HEK293 (cell line): ENCODE measurements at regions of chr17 and their contacts with region 1.

Region 1: DNA sequence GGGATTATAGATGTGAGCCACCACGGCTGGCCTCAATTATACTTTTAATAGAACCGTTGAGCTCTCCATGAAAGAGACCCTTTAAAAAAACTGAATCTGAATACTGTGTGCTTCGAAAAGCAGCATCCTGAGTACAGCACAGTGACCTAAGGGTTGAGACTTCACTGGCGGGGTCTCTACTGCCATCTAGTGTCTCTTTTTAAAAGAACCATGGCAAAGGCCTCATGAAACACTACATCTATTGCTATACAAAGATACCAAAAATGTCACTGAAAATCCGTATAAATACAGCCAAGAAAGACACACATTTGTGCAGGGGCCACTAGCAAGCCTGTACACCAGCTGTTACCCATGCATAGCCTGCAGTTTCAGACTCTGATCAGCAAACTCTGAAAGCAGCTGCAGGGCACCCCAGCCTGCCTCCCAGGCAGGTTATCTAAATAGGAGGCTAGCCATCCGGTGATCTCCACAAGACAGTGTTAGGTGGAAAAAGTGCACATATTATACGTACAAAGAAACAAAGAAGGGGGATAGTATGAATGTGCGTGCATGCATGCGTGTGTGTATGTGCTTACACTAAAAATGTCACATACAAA is 35.3 kb downstream of the NPLOC4 start:
- H3K4me3 ChIP-seq: no peak overlapping the region
- H3K27ac ChIP-seq: no peak overlapping the region
- H3K4me1 ChIP-seq: no peaks in the 10 kb centered on the region
- CTCF ChIP-seq: peak; percentile 43; the same call in 1 of the 2 replicates

Region 2: GRCh38 chr17:81419328-81419885 is 182.2 kb before region 1 on chr17:
- CTCF ChIA-PET with region 1: no interaction called
- POLR2A ChIA-PET with region 1: no interaction called
- H3K4me3 ChIP-seq: peak overlapping the region; percentile 25
- H3K27ac ChIP-seq: peak overlapping the region; percentile 81
- H3K4me1 ChIP-seq: peaks cover 16% of the 10 kb centered on the region
- CTCF ChIP-seq: no peak

Region 3: DNA sequence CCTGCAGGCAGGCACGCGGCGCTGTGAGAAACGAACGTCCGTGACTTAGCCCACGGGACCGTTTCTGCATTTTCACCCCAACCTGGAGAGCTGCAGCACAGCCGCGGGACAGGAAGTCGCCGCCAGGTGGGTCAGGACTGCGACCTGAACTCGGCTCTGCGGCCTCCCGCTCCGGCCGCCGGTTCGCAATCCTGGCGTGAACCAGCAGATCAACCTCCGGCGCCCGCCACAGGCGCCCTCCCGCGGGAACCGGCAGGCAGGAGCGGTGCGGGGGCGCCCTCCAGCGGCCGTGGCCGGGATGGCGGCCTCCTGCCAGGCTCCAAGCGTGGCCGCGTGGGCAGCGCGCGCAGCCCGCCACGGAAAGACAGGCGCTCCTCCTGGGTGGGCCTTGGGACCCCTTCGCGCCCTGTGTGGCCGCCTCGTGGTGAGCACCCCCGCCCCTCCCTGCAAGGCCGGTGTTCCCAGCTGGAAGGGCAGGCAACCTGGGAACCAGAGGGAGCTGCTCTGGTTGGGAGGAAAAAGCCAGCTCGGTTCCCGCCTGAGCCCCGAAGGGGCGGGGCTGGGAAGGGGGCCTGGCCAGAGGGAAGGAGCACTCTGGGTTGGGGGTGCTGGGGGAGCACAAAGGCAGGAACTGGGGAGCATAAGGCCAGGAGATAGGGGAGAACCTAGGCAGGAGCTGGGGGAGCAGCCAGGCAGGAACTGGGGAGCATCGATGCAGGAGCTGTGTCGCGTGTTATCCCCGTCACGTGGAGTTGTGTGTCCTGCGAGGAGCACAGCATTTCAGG is 117.2 kb before region 1 on chr17:
- CTCF ChIA-PET with region 1: interaction called, 17 read pairs
- POLR2A ChIA-PET with region 1: no interaction called
- H3K4me3 ChIP-seq: peak overlapping the region; percentile 45
- H3K27ac ChIP-seq: peak overlapping the region; percentile 24; the same call in 1 of the 2 replicates
- H3K4me1 ChIP-seq: peaks cover 8% of the 10 kb centered on the region
- CTCF ChIP-seq: peak; percentile 93

Region 4: GRCh38 chr17:81543339-81543675 is 58.3 kb before region 1 on chr17:
- CTCF ChIA-PET with region 1: interaction called, 13 read pairs
- POLR2A ChIA-PET with region 1: no interaction called
- H3K4me3 ChIP-seq: no peak overlapping the region
- H3K27ac ChIP-seq: no peak overlapping the region
- H3K4me1 ChIP-seq: no peaks in the 10 kb centered on the region
- CTCF ChIP-seq: no peak

Region 5: GRCh38 chr17:81558941-81559806 is 42.4 kb before region 1 on chr17:
- CTCF ChIA-PET with region 1: interaction called, 69 read pairs
- POLR2A ChIA-PET with region 1: no interaction called
- H3K4me3 ChIP-seq: no peak overlapping the region
- H3K27ac ChIP-seq: no peak overlapping the region
- H3K4me1 ChIP-seq: peaks cover 3% of the 10 kb centered on the region
- CTCF ChIP-seq: peak; percentile 86

Region 6: DNA sequence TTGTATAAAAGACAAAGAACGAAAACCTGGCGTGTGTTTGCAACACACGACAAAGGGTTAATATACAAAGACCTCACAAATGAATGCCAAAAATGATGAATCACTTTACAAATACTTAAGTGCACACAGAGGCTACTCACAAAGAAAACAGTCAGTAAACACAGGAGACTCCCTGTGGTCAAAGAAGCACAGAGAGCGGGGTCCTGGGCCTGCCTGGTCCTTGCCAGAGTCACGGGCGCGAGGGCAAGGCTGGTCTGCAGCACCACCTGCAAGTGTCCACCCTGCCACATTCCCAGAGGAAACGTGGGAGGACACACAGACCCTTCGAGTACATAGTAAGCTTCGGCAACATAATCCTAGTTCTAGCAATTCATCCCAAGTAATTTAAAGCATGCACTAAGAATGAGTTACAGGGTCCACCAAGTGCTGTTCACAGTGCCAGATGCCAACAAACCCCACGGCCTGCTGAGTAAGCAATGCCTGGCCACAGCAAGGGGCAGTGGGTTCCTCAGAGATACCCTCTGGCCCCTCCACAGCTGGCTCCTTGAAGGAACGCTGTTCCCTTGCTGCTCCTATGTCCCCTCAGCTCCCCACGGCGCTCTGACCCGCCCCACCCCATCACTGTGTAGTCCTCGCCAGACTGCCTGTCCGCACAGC is 24.9 kb before region 1 on chr17:
- CTCF ChIA-PET with region 1: interaction called, 18 read pairs
- POLR2A ChIA-PET with region 1: interaction called, 4 read pairs
- H3K4me3 ChIP-seq: no peak overlapping the region
- H3K27ac ChIP-seq: peak overlapping the region; percentile 59
- H3K4me1 ChIP-seq: peaks cover 16% of the 10 kb centered on the region
- CTCF ChIP-seq: no peak

Region 7: DNA sequence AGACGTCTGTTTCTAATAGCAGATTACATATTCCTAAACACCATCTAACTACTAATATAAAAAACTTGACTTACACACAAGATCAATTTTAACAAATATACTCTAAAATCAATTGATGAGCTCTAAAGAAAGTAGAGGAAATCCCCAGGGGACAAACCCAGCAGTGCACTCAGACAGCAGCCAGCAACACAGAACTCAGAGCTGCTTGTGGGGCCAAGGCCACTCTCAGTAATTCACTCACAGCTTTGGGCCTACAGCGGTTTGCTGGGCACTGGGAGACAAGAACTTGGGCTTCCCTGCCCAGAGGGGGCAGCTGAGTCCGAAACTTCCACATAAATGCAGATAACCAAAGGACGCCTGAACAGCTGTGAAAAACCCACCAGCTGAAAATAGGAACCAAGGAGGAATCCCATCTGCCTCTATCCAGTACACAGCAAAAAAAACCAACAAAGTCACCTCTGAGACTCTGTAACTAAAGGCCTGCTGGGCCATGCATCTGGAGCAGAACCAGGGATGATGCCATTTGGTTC is 13.8 kb after region 1 on chr17:
- CTCF ChIA-PET with region 1: interaction called, 23 read pairs
- POLR2A ChIA-PET with region 1: interaction called, 4 read pairs
- H3K4me3 ChIP-seq: no peak overlapping the region
- H3K27ac ChIP-seq: no peak overlapping the region; the same call in 1 of the 2 replicates
- H3K4me1 ChIP-seq: no peaks in the 10 kb centered on the region
- CTCF ChIP-seq: no peak

Region 8: DNA sequence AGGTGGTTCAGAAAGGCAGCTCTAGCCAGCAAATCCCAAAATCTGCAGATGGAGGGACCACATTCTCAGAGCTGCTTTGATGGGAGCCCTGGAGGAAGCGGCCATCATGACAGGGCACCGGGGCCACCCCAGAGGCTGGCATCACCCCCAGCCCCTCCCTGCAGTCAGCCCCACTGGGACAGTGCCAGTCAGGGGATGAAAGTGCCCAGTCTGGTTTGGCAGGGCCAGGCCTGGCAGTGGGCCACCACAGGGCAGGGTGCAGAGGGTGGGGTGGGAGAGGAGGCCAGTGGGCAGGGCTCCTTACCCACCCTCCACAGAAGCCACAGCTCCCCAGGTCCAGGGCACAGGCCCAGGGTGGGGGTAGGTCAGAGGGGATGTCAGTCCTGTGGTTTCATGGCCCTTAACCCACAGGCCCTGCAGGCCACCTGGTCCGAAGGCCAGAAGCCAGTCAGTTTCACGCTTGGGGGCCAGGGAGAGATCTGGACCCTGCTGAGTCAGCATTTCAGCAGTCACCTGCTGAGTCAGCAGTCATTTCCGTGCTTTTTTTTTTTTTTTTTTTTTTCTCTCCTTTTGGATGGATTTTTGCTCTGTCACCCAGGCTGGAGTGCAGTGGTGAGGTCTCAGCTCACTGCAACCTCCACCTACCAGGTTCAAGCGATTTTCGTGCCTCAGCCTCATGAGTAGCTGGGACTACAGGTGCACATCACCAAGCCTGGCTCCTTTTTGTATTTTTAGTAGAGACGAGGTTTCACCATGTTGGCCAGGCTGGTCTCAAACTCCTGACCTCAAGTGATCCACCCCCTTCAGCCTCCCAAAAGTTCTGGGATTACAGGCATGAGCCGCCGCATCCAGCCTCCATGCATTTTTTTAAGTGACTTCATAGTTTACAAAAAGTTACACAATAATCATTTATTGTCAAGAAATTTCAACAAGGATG is 120.8 kb after region 1 on chr17:
- CTCF ChIA-PET with region 1: no interaction called
- POLR2A ChIA-PET with region 1: no interaction called
- H3K4me3 ChIP-seq: no peak overlapping the region
- H3K27ac ChIP-seq: no peak overlapping the region
- H3K4me1 ChIP-seq: peaks cover 5% of the 10 kb centered on the region
- CTCF ChIP-seq: no peak

Region 9: GRCh38 chr17:81871387-81872230 is 270.0 kb after region 1 on chr17:
- CTCF ChIA-PET with region 1: no interaction called
- POLR2A ChIA-PET with region 1: no interaction called
- H3K4me3 ChIP-seq: peak overlapping the region; percentile 85
- H3K27ac ChIP-seq: peak overlapping the region; percentile 100
- H3K4me1 ChIP-seq: peaks cover 17% of the 10 kb centered on the region; the same call in 1 of the 2 replicates
- CTCF ChIP-seq: peak; percentile 95